Spleen (tissue), 13 donors: ENCODE measurements at regions of chr14 and their contacts with region 1.

Region 1: GRCh38 chr14:105374383-105374782 is 24.0 kb upstream of the TEX22 start:
- DNase-seq: no peak
- H3K4me3 ChIP-seq: no peak overlapping the region
- H3K27ac ChIP-seq: no peak overlapping the region
- H3K4me1 ChIP-seq: peaks cover 0 to 22% (median 5%) of the 10 kb centered on the region in 6 donors
- H3K27me3 ChIP-seq: no peaks in the 10 kb centered on the region
- CTCF ChIP-seq: no peak
- POLR2A ChIP-seq: no peak

Region 2: DNA sequence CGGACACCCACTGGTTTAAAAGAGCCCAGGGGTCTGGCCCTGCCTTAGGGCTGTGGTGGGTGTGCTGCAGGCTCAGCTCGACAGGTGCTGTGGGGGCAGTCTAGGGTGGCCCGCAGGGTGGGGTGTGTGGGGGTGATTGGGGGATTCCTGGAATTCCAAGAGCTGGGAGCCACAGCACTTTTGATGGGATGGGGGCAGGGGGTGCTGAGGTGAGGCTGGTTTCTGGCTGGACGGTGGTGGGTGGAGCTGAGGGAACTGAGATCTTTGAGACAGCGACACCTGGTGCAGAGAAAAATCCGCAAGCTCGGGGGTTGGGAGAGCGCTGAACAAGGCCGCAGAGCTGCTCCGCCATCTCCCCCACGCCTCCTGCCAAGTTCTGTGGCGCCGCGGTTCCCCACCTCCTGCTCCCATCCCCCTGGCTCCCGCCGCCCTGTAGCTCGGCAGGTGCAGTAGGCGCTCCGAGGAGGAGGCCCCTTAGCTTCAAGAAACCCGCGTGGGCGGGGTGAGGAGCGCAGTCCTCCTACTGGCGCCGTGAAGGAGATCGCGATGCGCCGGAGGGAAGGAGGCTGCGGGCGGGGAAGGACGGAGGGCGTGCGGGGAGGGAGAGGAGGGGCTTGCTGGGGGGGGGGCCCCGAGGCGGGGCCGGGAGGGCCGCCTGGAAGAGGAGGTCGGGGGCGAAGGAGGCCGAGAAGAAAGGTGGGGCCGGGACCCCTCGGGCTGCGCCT is 115.3 kb after region 1 on chr14:
- intact Hi-C with region 1: loop called (anchors 5 kb)
- DNase-seq: peak; percentile 94
- H3K4me3 ChIP-seq: peak overlapping the region; percentile 45 to 97 (median 75)
- H3K27ac ChIP-seq: peak overlapping the region; percentile 86 to 95 (median 92)
- H3K4me1 ChIP-seq: peaks cover 36 to 73% (median 66%) of the 10 kb centered on the region in 6 donors
- H3K27me3 ChIP-seq: peaks cover 0 to 35% (median 3%) of the 10 kb centered on the region in 7 donors
- CTCF ChIP-seq: peak; percentile 40 to 83 (median 74)
- POLR2A ChIP-seq: no peak